ENCODE measurements at regions of chr7 and their contacts with region 1.

Region 1: GRCh38 chr7:80374321-80374720 is 137.5 kb downstream of the GNAT3 start:
- DNase-seq: no peak
- ATAC-seq: no peak
- H3K4me3 ChIP-seq: no peak overlapping the region
- H3K27ac ChIP-seq: no peak overlapping the region
- H3K4me1 ChIP-seq: peaks cover 3% of the 10 kb centered on the region
- H3K27me3 ChIP-seq: no peaks in the 10 kb centered on the region
- CTCF ChIP-seq: no peak
- POLR2A ChIP-seq: no peak
- RAD21 ChIP-seq: no peak

Region 2: DNA sequence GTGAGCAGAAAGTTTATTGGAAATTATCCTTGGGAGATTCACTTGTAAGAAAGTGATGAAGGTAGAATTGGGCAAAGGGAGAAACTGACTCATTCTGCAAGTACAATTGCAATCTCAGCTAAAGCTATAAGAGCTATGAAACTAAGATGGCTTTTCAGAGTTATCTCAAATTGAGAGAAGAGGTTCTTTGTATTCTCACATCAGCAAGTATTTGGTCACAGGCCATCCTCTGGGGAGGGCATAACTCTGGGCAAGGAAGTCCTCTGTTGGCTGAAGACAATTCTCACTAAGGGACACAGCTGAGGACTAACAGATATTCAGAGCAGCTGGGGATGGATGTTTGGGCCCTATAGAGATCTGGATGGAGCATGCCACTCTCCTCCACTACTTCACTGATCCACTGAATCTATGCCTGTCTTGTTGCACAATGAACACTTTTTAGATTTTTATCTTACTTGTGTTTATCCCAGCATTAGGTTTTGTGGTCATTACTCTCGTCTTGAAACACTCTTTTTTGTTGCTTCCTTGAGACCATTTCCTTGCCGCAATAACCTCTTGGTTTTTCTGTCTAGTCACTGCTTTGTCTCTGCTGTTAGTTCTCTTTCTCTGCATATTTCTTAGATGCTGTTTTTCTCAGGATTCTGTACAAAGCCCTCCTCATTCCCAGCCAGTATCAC is 124.6 kb before region 1 on chr7:
- CTCF ChIA-PET with region 1: no interaction called
- POLR2A ChIA-PET with region 1: no interaction called
- dilution Hi-C with region 1: no loop called
- in situ Hi-C with region 1: no loop called
- intact Hi-C with region 1: no loop called
- DNase-seq: peak; percentile 29
- ATAC-seq: no peak
- H3K4me3 ChIP-seq: no peak overlapping the region
- H3K27ac ChIP-seq: no peak overlapping the region
- H3K4me1 ChIP-seq: peaks cover 9% of the 10 kb centered on the region
- H3K27me3 ChIP-seq: no peaks in the 10 kb centered on the region
- CTCF ChIP-seq: no peak
- POLR2A ChIP-seq: no peak
- RAD21 ChIP-seq: no peak

Region 3: GRCh38 chr7:80346704-80347103 is 27.6 kb before region 1 on chr7:
- CTCF ChIA-PET with region 1: no interaction called
- POLR2A ChIA-PET with region 1: interaction called, 10 read pairs
- dilution Hi-C with region 1: no loop called
- in situ Hi-C with region 1: no loop called
- intact Hi-C with region 1: no loop called
- DNase-seq: peak; percentile 80
- ATAC-seq: no peak
- H3K4me3 ChIP-seq: no peak overlapping the region
- H3K27ac ChIP-seq: no peak overlapping the region
- H3K4me1 ChIP-seq: peaks cover 2% of the 10 kb centered on the region
- H3K27me3 ChIP-seq: no peaks in the 10 kb centered on the region
- CTCF ChIP-seq: no peak
- POLR2A ChIP-seq: no peak
- RAD21 ChIP-seq: no peak

Region 4: DNA sequence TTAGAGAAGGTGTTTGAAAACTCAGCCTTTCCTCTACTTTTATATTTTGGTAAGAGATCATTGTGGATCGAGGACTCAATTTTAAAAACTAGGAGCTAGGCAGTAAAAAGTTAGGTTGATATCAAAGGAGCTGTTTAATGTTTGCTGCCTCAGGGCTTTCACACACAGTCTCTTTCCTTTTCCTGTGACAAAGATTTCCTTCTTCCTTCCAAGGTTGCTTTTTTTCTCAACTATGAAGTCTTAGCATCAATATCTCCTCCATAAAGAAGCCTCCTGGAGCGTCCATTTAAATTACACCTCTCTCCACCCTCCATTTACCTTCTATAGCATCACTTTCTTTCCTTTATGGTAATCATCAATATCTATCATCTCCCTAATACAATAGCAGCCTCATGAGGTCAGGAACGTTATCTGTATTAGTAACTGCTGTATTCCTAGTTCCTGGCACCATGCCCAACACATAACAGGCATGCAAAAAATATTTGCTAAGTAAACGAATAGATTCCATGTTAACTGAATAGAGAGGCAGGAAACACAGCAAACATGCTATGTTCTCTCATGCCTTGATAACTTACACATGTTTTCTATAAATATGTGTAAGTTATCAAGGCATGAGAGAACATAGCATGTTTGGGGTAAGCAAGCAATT is 89.1 kb after region 1 on chr7:
- CTCF ChIA-PET with region 1: no interaction called
- POLR2A ChIA-PET with region 1: no interaction called
- dilution Hi-C with region 1: no loop called
- in situ Hi-C with region 1: no loop called
- intact Hi-C with region 1: no loop called
- DNase-seq: peak; percentile 62
- ATAC-seq: no peak; the same call in 1 of the 2 replicates
- H3K4me3 ChIP-seq: no peak overlapping the region
- H3K27ac ChIP-seq: no peak overlapping the region
- H3K4me1 ChIP-seq: 0 out of 2 replicates have a peak, but pooled peaks cover 1% of the 10 kb centered on the region
- H3K27me3 ChIP-seq: no peaks in the 10 kb centered on the region
- CTCF ChIP-seq: no peak
- POLR2A ChIP-seq: no peak
- RAD21 ChIP-seq: no peak